CD8-positive, alpha-beta memory T cell (primary cell): ENCODE measurements at regions of chr10 and their contacts with region 1.

Region 1: DNA sequence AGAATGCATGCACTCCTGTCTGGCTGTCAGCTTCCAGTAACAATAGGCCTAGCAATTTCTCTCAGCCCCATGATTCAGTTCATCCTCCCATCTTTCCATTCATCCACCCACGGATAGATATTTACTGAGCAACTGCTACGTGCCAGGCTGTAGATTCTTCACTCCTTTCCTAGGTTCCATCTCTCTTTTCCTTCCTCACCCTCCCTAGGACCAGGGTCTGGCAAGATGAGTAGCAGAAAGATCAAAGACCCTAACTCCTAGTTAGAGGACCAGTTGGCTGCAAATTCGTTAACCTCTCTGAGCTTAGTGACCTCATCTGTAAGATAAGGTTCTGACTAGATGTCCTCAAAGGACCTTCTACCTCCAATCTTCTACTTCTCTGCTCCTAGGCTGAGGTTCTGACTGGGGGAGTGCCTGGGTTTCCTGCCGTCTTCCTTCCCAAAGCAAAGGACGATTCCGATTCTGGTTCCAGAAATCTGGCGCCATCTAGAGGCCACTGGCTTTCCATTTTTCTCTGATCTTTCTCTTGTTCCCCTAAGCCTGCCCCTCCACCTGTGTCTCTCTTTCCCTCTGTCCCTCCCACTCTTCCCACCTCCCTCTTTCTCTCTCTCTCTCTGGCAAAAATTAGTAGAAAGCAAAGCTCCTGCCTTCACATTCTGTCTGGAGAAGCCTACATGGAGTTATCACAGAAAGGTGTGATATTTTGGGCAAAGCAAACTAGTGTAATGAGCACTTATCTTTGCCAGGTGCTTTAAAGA is 26.2 kb downstream of the TBATA start:
- DNase-seq: peak; percentile 50 to 72 (median 55)
- H3K4me3 ChIP-seq: no peak overlapping the region
- H3K4me3 Mint-ChIP-seq: no peak overlapping the region
- H3K27ac ChIP-seq: peak overlapping the region; percentile 12
- H3K27ac Mint-ChIP-seq: no peak overlapping the region
- H3K4me1 ChIP-seq: peaks cover 7% of the 10 kb centered on the region
- H3K4me1 Mint-ChIP-seq: peaks cover 7 to 9% (median 8%) of the 10 kb centered on the region in 3 donors
- H3K27me3 ChIP-seq: no peaks in the 10 kb centered on the region
- H3K27me3 Mint-ChIP-seq: peaks cover 5 to 9% of the 10 kb centered on the region in 2 donors

Region 2: DNA sequence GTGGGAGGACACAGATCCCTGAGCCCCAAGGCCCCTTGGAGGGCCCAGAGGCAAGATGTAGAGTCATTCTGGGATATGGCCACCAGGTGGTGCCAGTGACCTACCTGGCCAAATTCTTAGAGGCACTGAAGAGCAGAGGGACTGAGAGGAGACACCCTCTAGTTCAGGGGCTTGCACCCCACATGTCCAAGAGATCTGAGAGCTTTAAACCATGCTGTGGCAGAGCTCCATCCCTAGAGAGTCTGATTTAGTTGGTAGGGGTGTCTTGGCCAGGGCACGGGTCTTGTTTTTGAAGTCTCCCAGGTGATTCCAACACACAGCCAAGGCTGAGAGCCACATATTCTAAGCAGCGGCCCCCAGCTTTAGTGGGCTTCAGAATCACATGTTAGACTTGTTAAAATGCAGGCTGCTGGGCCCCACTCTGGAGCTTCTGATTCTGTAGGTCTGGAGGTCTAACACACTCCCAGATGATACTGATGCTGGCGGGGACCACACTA is 208.9 kb before region 1 on chr10:
- CTCF ChIA-PET with region 1: interaction called, 87 read pairs
- POLR2A ChIA-PET with region 1: no interaction called
- DNase-seq: peak; percentile 62 to 82 (median 66)
- H3K4me3 ChIP-seq: no peak overlapping the region
- H3K4me3 Mint-ChIP-seq: peak overlapping the region in 1 of 7 donors; percentile 5
- H3K27ac ChIP-seq: no peak overlapping the region
- H3K27ac Mint-ChIP-seq: peak overlapping the region in 1 of 8 donors; percentile 4
- H3K4me1 ChIP-seq: no peaks in the 10 kb centered on the region
- H3K4me1 Mint-ChIP-seq: peaks cover 0 to 4% (median 0%) of the 10 kb centered on the region in 3 donors
- H3K27me3 ChIP-seq: no peaks in the 10 kb centered on the region
- H3K27me3 Mint-ChIP-seq: peaks cover 3% of the 10 kb centered on the region in 2 donors

Region 3: GRCh38 chr10:70699659-70700174 is 59.2 kb before region 1 on chr10:
- CTCF ChIA-PET with region 1: no interaction called
- POLR2A ChIA-PET with region 1: no interaction called
- DNase-seq: no peak
- H3K4me3 ChIP-seq: no peak overlapping the region
- H3K4me3 Mint-ChIP-seq: no peak overlapping the region
- H3K27ac ChIP-seq: no peak overlapping the region
- H3K27ac Mint-ChIP-seq: no peak overlapping the region
- H3K4me1 ChIP-seq: no peaks in the 10 kb centered on the region
- H3K4me1 Mint-ChIP-seq: no peaks in the 10 kb centered on the region
- H3K27me3 ChIP-seq: no peaks in the 10 kb centered on the region
- H3K27me3 Mint-ChIP-seq: peaks cover 0 to 2% of the 10 kb centered on the region in 2 donors

Region 4: DNA sequence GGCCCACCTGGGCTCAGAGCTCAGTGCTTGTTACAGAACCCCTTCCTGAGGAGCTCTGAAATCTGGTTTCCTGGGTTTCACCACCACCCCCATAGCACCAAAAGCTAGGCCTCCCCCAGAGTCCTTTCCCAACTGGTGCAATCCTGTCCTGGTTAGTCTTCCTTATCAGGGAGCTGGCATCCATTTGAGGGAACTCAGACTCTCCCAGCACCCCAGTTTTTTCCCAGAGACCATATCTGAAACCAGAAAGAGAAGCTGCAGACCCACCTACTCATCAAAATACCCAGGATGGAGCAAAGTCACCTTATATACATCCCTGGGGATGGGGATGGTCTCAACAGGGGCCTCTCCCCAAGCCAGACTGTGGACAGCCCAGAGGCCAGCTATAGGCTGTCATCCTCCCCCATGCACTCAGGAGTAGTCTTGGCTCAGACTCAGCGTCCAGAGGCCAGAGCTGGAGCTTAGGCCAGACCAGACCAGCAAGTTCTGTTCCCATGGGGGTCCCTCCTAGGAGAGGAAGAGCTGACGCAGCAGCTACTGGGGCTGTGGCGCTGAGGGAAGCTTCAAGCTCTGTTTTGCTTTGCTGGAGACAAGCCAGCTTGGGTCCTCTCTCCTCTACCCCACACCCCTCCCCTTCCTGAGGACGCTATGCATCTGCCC is 23.3 kb after region 1 on chr10:
- CTCF ChIA-PET with region 1: no interaction called
- POLR2A ChIA-PET with region 1: no interaction called
- DNase-seq: no peak
- H3K4me3 ChIP-seq: no peak overlapping the region
- H3K4me3 Mint-ChIP-seq: no peak overlapping the region
- H3K27ac ChIP-seq: no peak overlapping the region
- H3K27ac Mint-ChIP-seq: no peak overlapping the region
- H3K4me1 ChIP-seq: no peaks in the 10 kb centered on the region
- H3K4me1 Mint-ChIP-seq: peaks cover 0 to 9% (median 0%) of the 10 kb centered on the region in 3 donors
- H3K27me3 ChIP-seq: no peaks in the 10 kb centered on the region
- H3K27me3 Mint-ChIP-seq: peaks cover 5 to 8% of the 10 kb centered on the region in 2 donors